Activated T-helper 2 cell treated with anti-CD3 and anti-CD28 coated beads, Interferon-gamma antibody, Interleukin-2, Interleukin-4, amounts not matched to agents 10 μg/mL and 5 μg/mL and 100 μg/mL, durations not matched to agents 14 hours and 24 hours and 36 hours (primary cell): ENCODE measurements at regions of chr14 and their contacts with region 1.

Region 1: GRCh38 chr14:69242311-69243224 is 17.4 kb upstream of the GALNT16 start:
- DNase-seq: peak; percentile 28
- H3K4me3 Mint-ChIP-seq: no peak overlapping the region
- H3K27ac Mint-ChIP-seq: no peak overlapping the region
- H3K4me1 Mint-ChIP-seq: peaks cover 1% of the 10 kb centered on the region
- H3K27me3 Mint-ChIP-seq: no peaks in the 10 kb centered on the region

Region 2: DNA sequence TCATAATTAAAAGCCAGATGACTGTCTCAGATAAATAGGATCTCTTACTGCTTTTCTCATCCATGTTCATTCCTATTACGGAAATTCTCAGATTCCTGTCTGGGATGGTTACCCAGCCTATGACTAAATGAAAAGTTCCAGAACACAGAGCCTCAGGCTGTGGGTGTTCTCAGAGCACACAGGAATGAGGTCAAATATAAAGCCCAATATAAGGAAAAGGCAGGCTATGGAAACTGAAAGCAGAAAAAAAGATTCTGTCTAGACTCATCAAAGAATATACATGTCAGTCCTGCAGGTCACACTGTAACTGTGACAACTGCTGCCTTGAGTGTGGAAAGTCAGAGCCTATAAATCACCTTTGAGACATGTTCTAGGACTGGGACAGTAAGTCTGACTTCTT is 154.0 kb before region 1 on chr14:
- intact Hi-C with region 1: no loop called
- DNase-seq: no peak
- H3K4me3 Mint-ChIP-seq: no peak overlapping the region
- H3K27ac Mint-ChIP-seq: no peak overlapping the region
- H3K4me1 Mint-ChIP-seq: peaks cover 12% of the 10 kb centered on the region
- H3K27me3 Mint-ChIP-seq: no peaks in the 10 kb centered on the region

Region 3: DNA sequence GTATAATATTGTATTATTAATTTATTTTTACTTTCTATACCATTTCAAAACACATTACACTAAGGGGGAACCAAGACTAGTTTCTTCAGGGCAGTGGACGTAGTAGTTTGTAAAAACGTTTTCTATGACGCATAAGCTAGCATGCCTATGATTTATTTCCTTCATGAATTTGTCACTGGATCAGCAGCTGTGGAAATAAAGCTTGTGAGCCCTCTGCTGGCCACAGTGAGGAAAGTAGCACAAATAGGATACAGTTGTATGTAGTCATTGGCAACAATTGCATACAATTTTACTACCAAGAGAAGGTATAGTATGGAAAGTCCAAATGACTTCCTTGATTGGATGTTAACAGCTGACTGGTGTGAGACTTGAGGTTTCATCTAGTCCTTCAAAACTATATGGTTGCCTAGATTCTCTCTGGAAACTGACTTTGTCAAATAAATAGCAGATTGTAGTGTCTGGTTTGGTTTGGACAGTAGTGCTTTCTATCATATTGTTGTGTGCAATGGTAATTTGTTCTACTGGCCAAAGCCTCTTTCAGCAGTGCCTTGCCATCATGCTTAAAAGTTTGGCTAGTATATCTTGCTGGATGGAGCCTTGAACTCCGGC is 217.6 kb after region 1 on chr14:
- intact Hi-C with region 1: loop called (anchors 1 kb)
- DNase-seq: peak; percentile 40
- H3K4me3 Mint-ChIP-seq: no peak overlapping the region
- H3K27ac Mint-ChIP-seq: no peak overlapping the region
- H3K4me1 Mint-ChIP-seq: no peaks in the 10 kb centered on the region
- H3K27me3 Mint-ChIP-seq: no peaks in the 10 kb centered on the region